GM13977 (cell line): ENCODE measurements at regions of chr6 and their contacts with region 1.

Region 1: DNA sequence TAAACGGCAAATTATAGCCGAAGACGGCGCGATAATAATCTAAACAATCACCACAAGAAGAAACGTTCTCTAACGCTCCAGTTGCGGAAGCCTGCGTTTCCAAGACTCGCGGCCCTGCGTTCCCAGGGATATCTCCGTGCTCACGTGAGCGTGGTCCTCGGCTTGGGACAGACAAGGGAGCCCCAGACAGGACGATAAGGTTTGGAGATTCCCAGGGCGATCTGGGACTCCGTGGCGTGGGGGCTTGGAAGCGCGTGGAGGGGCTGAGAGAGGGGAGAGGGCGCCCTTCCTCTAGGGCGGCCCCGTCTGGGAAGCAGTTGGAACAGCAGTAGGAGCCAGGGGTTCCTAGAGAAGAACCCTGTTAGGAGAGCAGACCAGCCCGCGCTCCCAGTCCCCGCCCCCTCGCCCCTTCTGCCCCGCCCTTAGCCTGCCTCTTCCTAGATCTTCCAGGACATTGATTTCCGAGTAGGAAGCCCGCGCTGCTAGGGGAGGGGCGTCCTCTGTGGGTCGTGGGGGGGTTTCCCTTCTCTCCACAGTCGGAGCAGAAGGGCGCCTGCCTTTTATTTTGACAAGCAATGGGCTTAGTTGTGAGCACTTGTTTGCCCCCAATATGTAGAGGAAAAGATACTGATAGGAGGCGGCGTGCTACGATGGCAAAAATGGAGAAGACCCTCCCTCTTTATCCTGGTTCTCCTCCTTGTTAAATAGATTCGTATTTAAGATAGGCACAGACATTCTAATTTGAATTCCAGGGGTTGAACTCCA is 10.6 kb downstream of the NRN1 start:
- DNase-seq: no peak
- CTCF ChIP-seq: no peak

Region 2: GRCh38 chr6:5471044-5471443 is 525.1 kb before region 1 on chr6:
- in situ Hi-C with region 1: loop called (anchors 25 kb)
- DNase-seq: peak; percentile 75
- CTCF ChIP-seq: peak; percentile 93